Endothelial cell of umbilical vein (primary cell): ENCODE measurements at regions of chr1 and their contacts with region 1.

Region 1: DNA sequence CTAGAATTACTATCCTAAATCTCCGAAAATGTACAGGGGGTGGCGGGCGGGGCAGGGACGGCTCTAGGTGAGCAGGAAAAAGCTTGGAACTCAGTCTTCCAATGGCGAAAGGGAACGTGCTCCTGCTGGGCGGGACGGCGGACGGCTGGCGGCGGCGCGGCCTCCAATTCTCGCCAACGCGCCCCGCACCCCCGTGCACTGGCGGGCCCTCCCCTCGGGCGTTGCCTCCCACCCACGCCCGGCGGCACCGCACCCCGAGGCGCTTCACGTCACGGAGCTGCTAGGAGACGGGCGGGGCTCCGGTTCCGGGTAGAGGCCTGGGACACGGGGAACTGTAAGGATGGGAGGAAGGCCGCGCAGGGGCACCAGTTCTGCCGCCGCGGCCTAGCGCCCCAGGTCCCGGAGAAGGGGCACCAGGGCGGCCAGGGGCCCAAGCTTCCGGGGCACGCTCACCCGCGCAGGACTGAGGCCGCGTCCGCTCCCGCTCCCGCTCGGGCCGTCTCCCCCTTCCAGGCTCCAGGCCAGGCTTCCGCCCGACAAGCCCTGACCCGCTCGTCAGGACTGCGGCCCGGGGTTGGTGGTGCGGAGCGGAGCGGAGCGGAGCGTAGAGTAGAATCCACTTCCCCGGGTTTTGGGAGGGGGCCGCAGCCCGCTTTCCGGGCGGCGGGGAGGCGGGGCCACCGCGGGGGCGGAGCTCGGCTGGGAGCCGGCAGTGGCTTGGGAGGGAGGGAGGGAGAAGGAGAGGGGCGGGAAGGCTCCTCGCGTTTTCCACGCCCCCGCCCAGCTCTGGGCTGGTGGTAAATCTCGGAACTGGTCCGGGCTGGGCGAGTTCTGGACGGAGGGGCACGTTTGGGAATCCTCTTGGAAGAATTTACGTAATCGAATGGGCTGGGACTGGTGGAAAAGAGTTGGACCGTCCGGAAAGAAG is at the start of gene DDX59:
- DNase-seq: peak; percentile 98
- H3K4me3 ChIP-seq: peak within 1 kb of the TSS; percentile 81 to 99 (median 88)
- H3K27ac ChIP-seq: peak within 1 kb of the TSS; percentile 97
- H3K4me1 ChIP-seq: peaks cover 29% of the 10 kb centered on the region
- H3K27me3 ChIP-seq: no peaks in the 10 kb centered on the region
- CTCF ChIP-seq: no peak
- POLR2A ChIP-seq: no peak
- total RNA-seq, gene DDX59: 17.6 and 17.7 TPM in 2 replicates

Region 2: DNA sequence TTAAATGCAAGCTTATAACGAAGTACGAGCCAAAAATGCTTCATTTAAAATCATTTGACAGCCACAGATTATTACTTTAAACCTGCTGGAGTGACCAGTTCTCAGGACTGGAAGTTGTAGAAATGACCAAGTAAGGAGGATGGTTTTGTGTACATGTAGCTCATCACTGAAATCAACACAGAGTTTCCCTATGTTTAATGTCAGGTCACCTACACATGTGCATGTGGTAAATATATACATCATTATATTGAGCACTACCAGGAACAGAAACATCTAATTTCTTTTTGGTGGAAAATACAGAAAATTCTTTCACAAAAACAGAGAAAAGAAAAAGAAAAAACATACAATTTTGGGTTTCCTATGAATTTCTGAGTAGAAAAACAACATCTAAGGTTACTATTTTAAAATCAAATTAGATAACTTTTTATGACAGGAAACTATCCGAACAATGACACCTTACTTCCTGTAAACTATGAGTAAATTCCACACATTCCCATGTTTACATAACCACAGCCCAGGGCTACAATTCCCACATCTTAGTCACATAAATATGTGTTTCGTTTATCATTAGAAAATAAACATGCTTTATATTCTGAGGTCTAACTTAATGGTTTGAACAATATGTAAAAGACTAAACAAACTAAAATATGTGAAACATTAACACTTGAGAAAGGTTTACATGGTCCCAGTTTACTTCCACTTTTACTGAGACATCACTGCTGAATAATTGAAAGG is 333.3 kb before region 1 on chr1:
- CTCF ChIA-PET with region 1: no interaction called
- POLR2A ChIA-PET with region 1: interaction called, 10 read pairs
- dilution Hi-C with region 1: no loop called
- intact Hi-C with region 1: no loop called
- DNase-seq: peak; percentile 55
- H3K4me3 ChIP-seq: no peak overlapping the region
- H3K27ac ChIP-seq: peak overlapping the region; percentile 49
- H3K4me1 ChIP-seq: peaks cover 13% of the 10 kb centered on the region
- H3K27me3 ChIP-seq: no peaks in the 10 kb centered on the region
- CTCF ChIP-seq: no peak
- POLR2A ChIP-seq: no peak

Region 3: GRCh38 chr1:200538179-200538578 is 131.4 kb before region 1 on chr1:
- CTCF ChIA-PET with region 1: no interaction called
- POLR2A ChIA-PET with region 1: no interaction called
- dilution Hi-C with region 1: no loop called
- intact Hi-C with region 1: no loop called
- DNase-seq: no peak
- H3K4me3 ChIP-seq: no peak overlapping the region
- H3K27ac ChIP-seq: no peak overlapping the region
- H3K4me1 ChIP-seq: no peaks in the 10 kb centered on the region
- H3K27me3 ChIP-seq: no peaks in the 10 kb centered on the region
- CTCF ChIP-seq: no peak
- POLR2A ChIP-seq: no peak

Region 4: DNA sequence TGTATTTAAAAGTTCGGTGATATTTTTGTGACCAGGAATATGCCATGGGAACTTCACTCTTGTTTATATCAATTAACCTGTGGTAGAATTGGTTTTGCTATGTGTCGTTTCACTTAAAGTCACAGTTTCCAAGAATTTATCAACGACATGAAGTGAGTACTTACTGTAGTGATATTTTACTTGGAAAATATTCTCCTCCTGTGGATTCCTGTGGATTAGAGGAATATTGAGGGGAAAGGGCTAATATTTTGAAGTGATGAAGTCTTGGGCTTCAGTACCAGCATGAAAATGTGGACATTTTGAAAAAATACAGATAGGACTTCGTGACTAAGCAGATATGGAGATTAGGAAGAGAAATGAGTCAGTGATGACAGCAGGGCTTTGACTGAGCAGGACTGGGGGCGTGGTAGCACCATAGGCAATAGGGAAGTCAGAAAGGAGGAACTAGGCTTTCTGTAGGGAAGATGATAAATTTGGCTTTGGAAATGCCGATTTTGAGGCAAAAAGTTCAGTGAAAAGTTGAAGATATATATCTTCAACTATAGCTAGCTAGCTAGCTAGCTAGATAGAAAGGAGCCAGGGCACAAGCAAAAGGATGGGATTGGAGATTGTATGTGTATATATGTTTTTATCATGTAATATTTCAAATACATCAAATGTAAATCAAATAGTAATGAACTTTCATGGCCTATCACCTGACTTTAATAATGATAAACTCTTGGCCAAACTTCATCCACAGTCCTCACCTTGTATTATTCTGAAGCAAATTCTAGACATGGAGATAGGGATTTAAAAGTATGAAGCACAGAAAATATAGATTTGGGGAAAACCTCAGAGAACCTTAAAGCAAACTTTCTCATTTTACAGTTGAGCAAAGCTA is 29.5 kb before region 1 on chr1:
- CTCF ChIA-PET with region 1: interaction called, 5 read pairs
- POLR2A ChIA-PET with region 1: no interaction called
- dilution Hi-C with region 1: no loop called
- intact Hi-C with region 1: loop called (anchors 1 kb)
- DNase-seq: peak; percentile 81
- H3K4me3 ChIP-seq: no peak overlapping the region
- H3K27ac ChIP-seq: peak overlapping the region; percentile 77
- H3K4me1 ChIP-seq: peaks cover 14% of the 10 kb centered on the region
- H3K27me3 ChIP-seq: no peaks in the 10 kb centered on the region
- CTCF ChIP-seq: no peak
- POLR2A ChIP-seq: no peak

Region 5: GRCh38 chr1:200738740-200739498 is 69.3 kb after region 1 on chr1 and contains the start of gene CAMSAP2:
- CTCF ChIA-PET with region 1: interaction called, 11 read pairs
- POLR2A ChIA-PET with region 1: interaction called, 13 read pairs
- dilution Hi-C with region 1: no loop called
- intact Hi-C with region 1: loop called (anchors 1 kb)
- DNase-seq: peak; percentile 90
- H3K4me3 ChIP-seq: peak within 1 kb of the TSS; percentile 70 to 95 (median 88)
- H3K27ac ChIP-seq: peak within 1 kb of the TSS; percentile 92
- H3K4me1 ChIP-seq: peaks cover 29% of the 10 kb centered on the region
- H3K27me3 ChIP-seq: no peaks in the 10 kb centered on the region
- CTCF ChIP-seq: no peak
- POLR2A ChIP-seq: peak; percentile 81
- total RNA-seq, gene CAMSAP2: 43.9 and 45.5 TPM in 2 replicates

Region 6: GRCh38 chr1:200811704-200812103 is 142.1 kb after region 1 on chr1:
- CTCF ChIA-PET with region 1: no interaction called
- POLR2A ChIA-PET with region 1: no interaction called
- dilution Hi-C with region 1: no loop called
- intact Hi-C with region 1: no loop called
- DNase-seq: no peak
- H3K4me3 ChIP-seq: no peak overlapping the region
- H3K27ac ChIP-seq: no peak overlapping the region
- H3K4me1 ChIP-seq: no peaks in the 10 kb centered on the region
- H3K27me3 ChIP-seq: no peaks in the 10 kb centered on the region
- CTCF ChIP-seq: no peak
- POLR2A ChIP-seq: no peak